ENCODE measurements at regions of chr12 and their contacts with region 1.

Region 1: DNA sequence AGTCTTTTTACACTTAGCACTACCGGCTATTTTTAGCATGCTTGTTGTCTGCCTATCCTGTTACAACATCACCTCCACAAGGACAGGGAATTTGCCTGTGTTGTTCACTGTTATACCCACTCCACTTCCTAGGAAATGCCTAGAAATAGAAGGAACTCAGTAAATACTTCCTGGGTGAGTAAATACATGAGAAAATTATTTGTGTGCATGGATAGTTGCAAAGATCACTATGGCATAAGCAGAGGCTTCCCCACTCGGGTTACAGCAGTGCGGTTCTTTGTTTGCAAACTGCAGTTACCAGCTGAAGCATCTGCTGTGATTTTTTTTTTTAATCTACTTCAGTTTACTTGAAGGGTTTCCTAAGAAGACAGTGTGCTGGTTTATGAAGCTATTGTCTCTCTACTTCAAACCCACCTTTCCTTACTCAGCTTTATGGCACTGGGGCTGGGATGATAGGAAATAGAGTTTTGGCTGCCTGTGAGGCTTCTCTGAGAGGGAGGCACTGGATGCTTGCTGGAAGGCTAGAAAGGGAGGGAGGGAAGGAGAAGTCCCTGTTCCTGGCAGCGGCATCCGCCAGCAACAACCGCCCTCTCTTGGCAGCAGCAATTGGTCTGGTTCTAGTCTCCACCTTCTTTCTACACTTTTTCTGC is 29.0 kb downstream of the PDE6H start:
- DNase-seq: peak; percentile 24
- H3K4me3 ChIP-seq: no peak overlapping the region
- H3K27ac ChIP-seq: peak overlapping the region; percentile 44 to 82 (median 65)
- H3K4me1 ChIP-seq: peaks cover 0 to 27% (median 4%) of the 10 kb centered on the region in 4 donors
- H3K27me3 ChIP-seq: peaks cover 8% of the 10 kb centered on the region
- CTCF ChIP-seq: no peak
- EP300 ChIP-seq: no peak
- POLR2A ChIP-seq: no peak

Region 2: GRCh38 chr12:14739489-14739888 is 262.4 kb before region 1 on chr12:
- in situ Hi-C with region 1: loop called in 1 of 4 experiments (anchors 10 kb)
- intact Hi-C with region 1: no loop called
- DNase-seq: no peak
- H3K4me3 ChIP-seq: no peak overlapping the region
- H3K27ac ChIP-seq: no peak overlapping the region
- H3K4me1 ChIP-seq: no peaks in the 10 kb centered on the region
- H3K27me3 ChIP-seq: no peaks in the 10 kb centered on the region
- CTCF ChIP-seq: no peak
- EP300 ChIP-seq: no peak
- POLR2A ChIP-seq: no peak

Region 3: GRCh38 chr12:15033046-15033445 is 31.2 kb after region 1 on chr12:
- in situ Hi-C with region 1: no loop called
- intact Hi-C with region 1: no loop called
- DNase-seq: no peak
- H3K4me3 ChIP-seq: no peak overlapping the region
- H3K27ac ChIP-seq: no peak overlapping the region
- H3K4me1 ChIP-seq: no peaks in the 10 kb centered on the region
- H3K27me3 ChIP-seq: no peaks in the 10 kb centered on the region
- CTCF ChIP-seq: no peak
- EP300 ChIP-seq: no peak
- POLR2A ChIP-seq: no peak

Region 4: GRCh38 chr12:15220994-15221885 is 219.4 kb after region 1 on chr12 and contains the start of gene RERG:
- in situ Hi-C with region 1: loop called in 1 of 4 experiments (anchors 10 kb)
- intact Hi-C with region 1: loop called (anchors 5 kb)
- DNase-seq: peak; percentile 79
- H3K4me3 ChIP-seq: peak within 1 kb of the TSS; percentile 6 to 59 (median 38)
- H3K27ac ChIP-seq: peak within 1 kb of the TSS; percentile 76 to 84 (median 79)
- H3K4me1 ChIP-seq: peaks cover 0 to 16% (median 8%) of the 10 kb centered on the region in 4 donors
- H3K27me3 ChIP-seq: peaks cover 10% of the 10 kb centered on the region
- CTCF ChIP-seq: peak; percentile 88 to 97 (median 97)
- EP300 ChIP-seq: no peak
- POLR2A ChIP-seq: no peak
- total RNA-seq, gene RERG: 3.6 to 12.6 (median 8.6) TPM

Region 5: DNA sequence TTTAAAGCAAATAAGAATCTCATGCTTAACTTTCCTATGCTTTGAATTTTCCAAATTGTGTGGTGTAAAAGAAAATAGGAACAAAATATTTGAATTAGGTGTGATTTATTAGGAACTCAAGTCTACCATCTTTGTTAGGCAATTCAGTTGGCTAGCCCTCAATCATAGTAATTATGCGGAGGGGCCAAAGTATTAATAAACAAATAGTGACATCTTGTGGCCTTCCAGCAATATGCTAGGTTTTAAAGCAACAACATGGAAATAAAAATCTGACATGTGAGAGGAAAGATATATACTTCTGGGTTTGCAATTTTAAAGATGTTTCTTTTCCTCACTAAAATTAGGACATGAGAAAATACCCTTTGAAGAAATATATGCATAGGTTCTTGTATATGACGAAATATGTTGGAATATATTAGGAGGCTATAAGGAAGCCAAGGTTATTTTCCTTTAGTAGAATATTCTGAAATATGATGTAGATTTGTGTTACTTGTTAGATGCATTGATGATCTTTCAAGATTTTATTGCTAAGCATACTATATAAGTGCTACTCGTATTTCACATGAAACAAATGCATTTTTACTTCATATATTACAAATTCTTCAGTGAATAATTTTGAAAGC is 520.8 kb after region 1 on chr12:
- in situ Hi-C with region 1: loop called in 1 of 4 experiments (anchors 25 kb)
- intact Hi-C with region 1: no loop called
- DNase-seq: no peak
- H3K4me3 ChIP-seq: no peak overlapping the region
- H3K27ac ChIP-seq: no peak overlapping the region
- H3K4me1 ChIP-seq: no peaks in the 10 kb centered on the region
- H3K27me3 ChIP-seq: peaks cover 4% of the 10 kb centered on the region
- CTCF ChIP-seq: peak; percentile 37 to 47 (median 40)
- EP300 ChIP-seq: no peak
- POLR2A ChIP-seq: no peak

Measured in transverse colon (tissue), 4 donors.